H1 (cell line): ENCODE measurements at regions of chr11 and their contacts with region 1.

Region 1: GRCh38 chr11:17063171-17064002 is 14.1 kb downstream of the RPS13 start:
- DNase-seq: peak; percentile 46 to 93
- H3K4me3 ChIP-seq: no peak overlapping the region
- H3K27ac ChIP-seq: no peak overlapping the region
- H3K4me1 ChIP-seq: no peaks in the 10 kb centered on the region
- H3K27me3 ChIP-seq: no peaks in the 10 kb centered on the region
- CTCF ChIP-seq: peak; percentile 84 to 97 (median 92)
- EP300 ChIP-seq: no peak
- POLR2A ChIP-seq: no peak
- RAD21 ChIP-seq: peak; percentile 99 to 100

Region 2: DNA sequence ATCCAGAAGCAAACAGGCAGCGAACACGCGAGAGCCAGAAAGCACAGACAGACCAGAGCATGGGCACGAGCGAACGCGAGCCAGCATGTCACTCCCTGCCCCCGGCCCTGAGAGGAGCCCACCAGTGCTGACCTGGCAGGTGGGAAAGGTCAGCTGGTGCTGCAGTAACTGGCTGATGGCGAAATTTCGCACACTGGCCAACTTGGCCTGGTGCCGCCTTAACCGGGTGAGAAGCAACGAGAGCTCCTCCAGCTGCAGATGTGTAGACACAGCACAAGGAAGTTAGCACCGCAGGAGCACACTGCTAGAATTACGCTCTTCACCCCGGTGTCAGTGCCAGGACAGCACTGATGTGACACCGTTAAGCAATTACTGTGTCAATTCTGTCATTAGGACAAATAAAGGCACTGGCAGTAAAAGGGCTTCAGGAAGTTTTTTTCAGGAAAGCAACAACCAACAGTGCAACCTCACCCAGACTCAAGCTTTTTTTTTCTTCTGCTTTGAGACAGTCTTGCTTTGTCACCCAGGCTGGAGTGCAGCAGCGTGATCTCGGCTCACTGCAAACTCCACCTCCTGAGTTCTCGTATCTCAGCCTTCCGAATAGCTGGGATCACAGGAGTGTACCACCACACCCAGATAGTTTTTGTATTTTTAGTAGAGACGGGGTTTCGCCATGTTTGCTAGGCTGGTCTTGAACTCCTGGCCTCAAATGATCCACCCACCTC is 248.2 kb before region 1 on chr11:
- CTCF ChIA-PET with region 1: interaction called, 50 read pairs
- POLR2A ChIA-PET with region 1: interaction called, 3 read pairs
- DNase-seq: no peak
- H3K4me3 ChIP-seq: no peak overlapping the region
- H3K27ac ChIP-seq: no peak overlapping the region; the same call in 1 of the 2 replicates
- H3K4me1 ChIP-seq: peaks cover 0 to 2% (median under 1%) of the 10 kb centered on the region in 4 experiments; a peak in 1 of 7 replicates
- H3K27me3 ChIP-seq: no peaks in the 10 kb centered on the region
- CTCF ChIP-seq: no peak
- EP300 ChIP-seq: no peak
- POLR2A ChIP-seq: no peak
- RAD21 ChIP-seq: no peak

Region 3: DNA sequence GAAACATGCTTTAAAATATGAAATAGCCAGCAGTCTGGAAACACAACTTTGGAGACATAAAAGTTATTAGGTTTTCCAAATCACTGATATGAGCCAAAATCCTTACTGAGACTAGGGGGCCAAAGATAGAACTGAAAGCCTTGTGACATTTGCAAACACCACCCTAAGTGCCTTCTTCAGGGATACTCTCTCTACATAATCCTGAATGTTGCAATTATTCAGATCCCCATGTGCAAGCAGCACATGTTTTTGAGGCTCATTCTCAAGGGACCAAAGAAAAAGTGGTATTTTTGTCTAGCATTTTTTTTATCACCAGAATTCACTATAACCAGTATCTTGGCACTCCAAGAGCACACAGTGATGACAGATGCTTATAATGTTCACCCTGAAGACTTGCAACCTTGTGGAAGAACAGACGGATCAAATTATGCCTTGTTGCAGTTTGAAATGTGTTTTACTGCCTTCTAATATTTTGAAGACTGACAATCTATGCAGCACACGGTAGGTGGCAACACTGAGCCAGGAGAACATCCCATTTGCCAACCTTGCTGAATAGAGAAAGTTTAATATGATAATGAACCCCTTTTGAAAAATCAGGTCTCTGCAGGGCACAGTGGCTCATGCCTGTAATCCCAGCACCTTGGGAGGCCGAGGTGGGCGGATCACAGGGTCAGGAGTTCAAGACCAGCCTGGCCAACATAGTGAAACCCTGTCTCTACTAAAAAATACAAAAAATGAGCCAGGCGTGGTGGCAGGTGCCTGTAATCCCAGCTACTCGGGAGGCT is 127.7 kb before region 1 on chr11:
- CTCF ChIA-PET with region 1: interaction called, 27 read pairs
- POLR2A ChIA-PET with region 1: no interaction called
- DNase-seq: no peak
- H3K4me3 ChIP-seq: no peak overlapping the region
- H3K27ac ChIP-seq: no peak overlapping the region
- H3K4me1 ChIP-seq: peaks cover 0 to 3% (median 0%) of the 10 kb centered on the region in 4 experiments; a peak in 2 of 7 replicates
- H3K27me3 ChIP-seq: no peaks in the 10 kb centered on the region
- CTCF ChIP-seq: peak in 2 of 3 experiments; percentile 73 to 74; a peak in 3 of 4 replicates
- EP300 ChIP-seq: no peak
- POLR2A ChIP-seq: no peak
- RAD21 ChIP-seq: peak; percentile 80 to 84

Region 4: DNA sequence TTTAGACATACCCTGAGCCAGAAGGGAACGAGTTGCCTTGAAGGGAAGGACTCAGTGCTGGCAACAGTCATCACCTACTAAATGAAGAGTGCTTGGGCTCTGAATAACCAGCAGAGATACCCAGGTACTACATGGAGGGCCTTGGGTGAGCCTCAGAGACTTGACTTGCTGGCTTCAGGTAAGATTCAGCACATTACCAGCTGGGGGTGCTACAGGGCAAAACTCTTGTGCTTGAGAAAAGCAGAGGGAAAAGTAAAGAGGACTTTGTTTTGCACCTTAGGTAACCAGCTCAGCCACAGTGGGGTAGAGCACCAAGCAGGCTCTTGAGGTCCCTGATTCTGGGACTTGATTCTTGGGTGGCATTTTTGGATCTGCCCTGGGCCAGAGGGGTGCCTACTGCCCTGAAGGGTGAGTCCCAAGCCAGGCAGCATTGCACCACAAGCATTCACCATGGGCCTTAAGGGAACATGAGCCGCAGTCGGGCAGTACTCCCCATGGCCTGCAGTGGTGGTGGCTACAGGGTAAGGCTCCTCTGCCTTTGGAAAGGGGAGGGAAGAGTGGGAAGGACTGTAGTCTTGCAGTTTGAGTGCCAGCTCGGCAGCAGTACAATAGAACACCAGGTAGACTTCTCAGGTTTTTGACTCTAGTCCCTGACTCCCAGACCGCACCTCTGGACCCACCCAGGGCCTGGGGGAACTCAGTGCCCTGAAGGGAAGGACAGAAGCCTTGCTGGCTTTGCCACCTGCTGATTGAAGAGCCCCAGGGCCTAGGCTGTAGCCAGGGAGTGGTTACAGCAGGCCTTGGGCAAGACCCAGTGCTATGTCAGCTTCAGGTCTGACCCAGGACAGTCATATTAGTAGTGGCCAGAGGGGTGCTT is 26.5 kb before region 1 on chr11:
- CTCF ChIA-PET with region 1: interaction called, 22 read pairs
- POLR2A ChIA-PET with region 1: no interaction called
- DNase-seq: peak in 1 of 2 experiments; percentile 66
- H3K4me3 ChIP-seq: no peak overlapping the region
- H3K27ac ChIP-seq: no peak overlapping the region
- H3K4me1 ChIP-seq: no peaks in the 10 kb centered on the region; a peak in 1 of 7 replicates
- H3K27me3 ChIP-seq: no peaks in the 10 kb centered on the region
- CTCF ChIP-seq: peak; percentile 9 to 72 (median 55)
- EP300 ChIP-seq: no peak
- POLR2A ChIP-seq: no peak
- RAD21 ChIP-seq: peak; percentile 45 to 61

Region 5: DNA sequence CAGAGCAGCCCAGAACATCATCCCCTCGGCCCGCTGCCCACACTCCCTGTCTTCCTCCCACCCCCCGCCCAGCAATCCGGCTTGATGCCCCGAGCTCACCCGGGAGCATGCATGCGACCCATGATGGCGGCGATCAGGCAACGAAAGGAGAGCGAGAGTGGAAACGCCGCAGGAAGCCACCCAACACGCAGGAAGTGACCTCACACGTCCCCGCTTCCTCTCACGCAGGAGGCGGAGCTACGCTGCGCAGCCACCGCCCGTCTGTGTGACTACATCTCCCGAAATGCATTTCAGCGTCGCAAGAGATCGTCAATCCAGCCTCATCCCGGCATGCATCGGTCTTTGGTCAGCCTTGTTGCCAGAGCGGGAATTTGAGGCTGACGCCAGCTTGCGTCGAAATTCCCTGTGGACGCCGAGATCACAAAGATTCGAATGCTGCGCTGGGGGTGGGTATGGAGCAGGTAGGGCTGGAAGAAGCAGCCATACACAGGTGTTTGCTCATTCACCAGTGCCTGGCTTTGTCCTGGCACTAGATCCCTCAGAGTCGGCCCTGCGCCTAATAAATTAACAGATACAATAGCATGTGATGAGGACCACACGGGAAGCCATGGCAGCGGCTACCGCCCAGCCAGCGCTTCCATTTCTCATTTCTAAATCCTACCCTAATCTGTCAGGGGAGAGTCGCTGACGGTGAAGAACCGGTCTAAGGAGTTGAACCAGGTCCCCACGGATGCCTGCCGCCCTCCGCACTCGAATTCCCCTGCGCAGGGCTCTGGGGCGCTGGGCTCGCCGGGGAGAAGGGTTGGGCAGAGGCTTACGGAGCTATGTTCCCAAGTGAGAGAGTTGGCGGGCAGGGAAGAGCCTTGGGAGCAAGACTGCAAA is 14.4 kb after region 1 on chr11 and contains the start of gene RPS13:
- CTCF ChIA-PET with region 1: interaction called, 3 read pairs
- POLR2A ChIA-PET with region 1: interaction called, 47 read pairs
- DNase-seq: peak; percentile 91 to 98
- H3K4me3 ChIP-seq: peak within 1 kb of the TSS; percentile 84 to 99 (median 94)
- H3K27ac ChIP-seq: peak within 1 kb of the TSS; percentile 97
- H3K4me1 ChIP-seq: peaks cover 0 to 5% (median 3%) of the 10 kb centered on the region in 4 experiments; a peak in 6 of 7 replicates
- H3K27me3 ChIP-seq: no peaks in the 10 kb centered on the region
- CTCF ChIP-seq: peak in 1 of 3 experiments; percentile 1; a peak in 1 of 4 replicates
- EP300 ChIP-seq: no peak
- POLR2A ChIP-seq: peak; percentile 92 to 97; a peak in 2 of 3 replicates
- RAD21 ChIP-seq: no peak
- total RNA-seq, gene RPS13: 1,310 and 1,336 TPM in 2 replicates

Region 6: GRCh38 chr11:17132654-17133053 is 69.3 kb after region 1 on chr11:
- CTCF ChIA-PET with region 1: no interaction called
- POLR2A ChIA-PET with region 1: no interaction called
- DNase-seq: no peak
- H3K4me3 ChIP-seq: no peak overlapping the region
- H3K27ac ChIP-seq: no peak overlapping the region
- H3K4me1 ChIP-seq: 0 out of 7 replicates have a peak, but pooled peaks cover 0 to 2% (median 0%) of the 10 kb centered on the region in 4 experiments
- H3K27me3 ChIP-seq: no peaks in the 10 kb centered on the region
- CTCF ChIP-seq: no peak
- EP300 ChIP-seq: no peak
- POLR2A ChIP-seq: no peak
- RAD21 ChIP-seq: no peak